ENCODE measurements at regions of chr10 and their contacts with region 1.

Region 1: GRCh38 chr10:13371897-13372470 is 23.9 kb upstream of the SEPHS1 start:
- DNase-seq: peak; percentile 85
- H3K4me3 Mint-ChIP-seq: no peak overlapping the region
- H3K27ac Mint-ChIP-seq: no peak overlapping the region
- H3K4me1 Mint-ChIP-seq: no peaks in the 10 kb centered on the region
- H3K27me3 Mint-ChIP-seq: no peaks in the 10 kb centered on the region

Region 2: DNA sequence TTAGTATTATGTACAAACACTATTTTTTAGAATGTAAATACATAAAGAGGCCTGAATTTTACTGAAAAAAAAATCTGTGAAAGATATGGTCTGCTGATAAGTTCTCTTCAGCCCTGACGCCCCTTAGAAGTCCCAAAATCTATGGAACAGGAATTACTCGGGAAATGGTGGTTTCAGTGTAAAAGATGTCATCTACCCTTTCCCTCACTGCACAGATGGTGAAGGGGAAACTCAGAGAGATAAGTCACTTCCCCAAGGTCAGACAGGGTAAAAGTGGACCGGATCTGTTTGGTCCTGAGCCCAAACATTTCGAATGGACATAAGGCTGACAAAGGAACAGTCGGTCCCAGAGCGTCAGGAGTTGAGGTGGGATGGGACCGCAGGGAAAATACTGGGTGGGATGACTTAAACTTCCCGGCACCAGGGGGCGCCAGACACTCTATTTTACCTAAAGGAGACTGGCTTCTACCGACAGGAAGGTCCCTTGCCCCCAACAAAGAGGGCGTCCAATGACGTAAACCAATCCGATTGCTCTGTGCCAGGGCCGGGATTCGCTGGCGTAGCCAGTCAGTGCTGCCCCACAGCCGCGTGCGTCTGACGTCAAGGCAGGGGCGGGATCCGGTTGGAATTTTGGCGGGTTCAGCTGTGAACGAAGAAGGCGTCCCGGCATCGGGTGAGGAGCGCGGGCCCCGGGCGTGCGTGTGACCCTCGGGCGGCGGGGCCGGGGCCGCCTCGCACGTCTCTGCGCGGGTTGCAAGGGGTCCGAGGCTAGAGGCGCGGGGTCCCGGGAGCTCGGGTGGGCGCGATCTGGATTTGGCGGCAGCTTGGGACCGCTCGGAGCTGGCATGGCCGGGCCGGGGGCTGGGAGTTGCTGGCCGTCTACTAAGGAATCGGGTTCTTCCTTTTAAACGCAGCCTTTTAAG is 210.8 kb before region 1 on chr10 and contains the start of gene MCM10:
- CTCF ChIA-PET with region 1: no interaction called
- intact Hi-C with region 1: loop called (anchors 5 kb)
- DNase-seq: peak; percentile 99
- H3K4me3 Mint-ChIP-seq: peak within 1 kb of the TSS; percentile 88
- H3K27ac Mint-ChIP-seq: peak within 1 kb of the TSS; percentile 63
- H3K4me1 Mint-ChIP-seq: peaks cover 27% of the 10 kb centered on the region
- H3K27me3 Mint-ChIP-seq: peaks cover 2% of the 10 kb centered on the region
- total RNA-seq, gene MCM10: 76.9 to 81.1 TPM

Region 3: GRCh38 chr10:13388478-13389230 is 16.7 kb after region 1 on chr10:
- CTCF ChIA-PET with region 1: interaction called, 22 read pairs
- intact Hi-C with region 1: no loop called
- DNase-seq: no peak
- H3K4me3 Mint-ChIP-seq: no peak overlapping the region
- H3K27ac Mint-ChIP-seq: no peak overlapping the region
- H3K4me1 Mint-ChIP-seq: peaks cover 2% of the 10 kb centered on the region
- H3K27me3 Mint-ChIP-seq: peaks cover 20% of the 10 kb centered on the region

Region 4: GRCh38 chr10:13536674-13537366 is 164.8 kb after region 1 on chr10:
- CTCF ChIA-PET with region 1: interaction called, 30 read pairs
- intact Hi-C with region 1: loop called (anchors 1 kb)
- DNase-seq: peak; percentile 70
- H3K4me3 Mint-ChIP-seq: no peak overlapping the region
- H3K27ac Mint-ChIP-seq: no peak overlapping the region
- H3K4me1 Mint-ChIP-seq: no peaks in the 10 kb centered on the region
- H3K27me3 Mint-ChIP-seq: peaks cover 48% of the 10 kb centered on the region

Region 5: GRCh38 chr10:13651969-13652720 is 280.2 kb after region 1 on chr10:
- CTCF ChIA-PET with region 1: no interaction called
- intact Hi-C with region 1: loop called (anchors 2 kb)
- DNase-seq: peak; percentile 33
- H3K4me3 Mint-ChIP-seq: no peak overlapping the region
- H3K27ac Mint-ChIP-seq: peak overlapping the region; percentile 19
- H3K4me1 Mint-ChIP-seq: peaks cover 19% of the 10 kb centered on the region
- H3K27me3 Mint-ChIP-seq: no peaks in the 10 kb centered on the region